ENCODE measurements at regions of chr1 and their contacts with region 1.

Region 1: DNA sequence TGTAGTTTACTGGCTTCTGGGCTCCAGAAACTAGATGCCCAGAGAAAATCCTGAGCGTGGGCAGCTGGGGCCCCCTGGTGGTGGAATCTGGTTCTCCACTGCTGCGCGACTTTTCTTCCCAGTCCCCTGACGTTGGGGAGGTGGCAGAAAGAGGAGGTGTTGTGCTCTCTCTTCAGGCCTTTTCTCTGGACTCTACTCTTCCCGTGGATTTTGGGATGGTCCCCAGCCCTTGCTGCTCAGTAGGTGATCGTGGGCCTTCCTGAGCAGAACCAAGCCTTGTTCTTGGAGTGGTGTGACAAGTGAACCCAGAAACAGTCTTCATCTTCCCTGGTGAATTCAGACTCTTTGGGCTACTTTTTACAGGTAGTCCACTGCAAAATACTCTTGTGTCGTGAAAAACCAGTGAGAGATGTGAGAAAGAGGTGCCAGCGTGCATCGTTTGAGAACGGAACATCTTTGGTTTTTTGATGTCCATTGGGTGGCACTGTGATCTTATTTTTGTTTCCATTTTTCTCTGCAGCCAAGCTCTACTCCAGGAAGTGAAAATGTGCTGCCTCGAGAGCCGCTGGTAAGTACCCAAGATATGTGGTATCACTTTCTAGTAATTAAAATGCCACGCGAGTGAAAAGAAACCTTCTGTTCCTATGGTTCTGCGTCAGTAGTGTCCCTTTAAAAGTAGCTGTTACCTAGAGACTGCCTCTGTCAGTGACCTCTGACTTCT is 20.2 kb downstream of the PEX14 start:
- DNase-seq: peak; percentile 76
- H3K4me3 ChIP-seq: peak overlapping the region; percentile 36
- H3K27ac ChIP-seq: peak overlapping the region; percentile 6
- H3K4me1 ChIP-seq: peaks cover 13% of the 10 kb centered on the region
- H3K27me3 ChIP-seq: no peaks in the 10 kb centered on the region
- CTCF ChIP-seq: peak; percentile 96

Region 2: DNA sequence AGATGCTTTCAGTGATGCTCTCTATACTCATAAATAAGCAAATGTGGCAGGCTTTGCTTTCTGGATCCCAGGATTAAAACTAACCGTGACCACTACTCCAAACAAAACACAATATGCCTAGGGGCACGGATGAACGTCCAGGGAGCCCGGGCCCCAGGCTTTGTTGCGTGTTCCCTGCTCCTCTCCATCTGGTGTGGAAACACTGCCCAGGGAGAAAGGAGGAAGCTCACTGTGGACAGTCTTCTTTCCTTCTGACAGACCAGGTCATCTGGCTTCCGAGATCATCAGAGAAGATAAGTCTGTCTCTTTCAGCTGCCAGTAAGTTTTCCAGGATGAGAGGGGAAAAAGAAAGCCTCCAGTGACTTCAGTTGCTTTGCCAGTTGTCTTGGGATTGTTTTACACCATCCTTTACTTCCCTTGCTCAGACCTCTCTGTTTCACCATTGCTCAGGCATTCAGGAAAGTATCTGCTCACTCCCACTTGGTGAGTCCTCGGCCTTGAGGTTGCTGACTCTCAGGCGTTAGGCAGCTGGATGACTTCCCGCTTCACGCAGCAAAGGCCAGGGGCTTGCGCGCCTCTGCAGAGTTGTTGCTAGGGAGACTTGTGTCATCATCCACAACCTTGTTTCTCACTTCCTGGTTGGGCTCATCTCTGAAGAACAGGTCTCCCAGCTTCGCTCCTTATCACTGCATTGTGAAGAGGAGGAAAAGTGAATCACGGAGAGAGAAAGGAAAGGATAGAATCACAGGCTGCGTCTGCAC is 116.7 kb before region 1 on chr1:
- CTCF ChIA-PET with region 1: no interaction called
- POLR2A ChIA-PET with region 1: interaction called, 3 read pairs
- intact Hi-C with region 1: loop called (anchors 2 kb)
- DNase-seq: no peak
- H3K4me3 ChIP-seq: no peak overlapping the region
- H3K27ac ChIP-seq: no peak overlapping the region
- H3K4me1 ChIP-seq: no peaks in the 10 kb centered on the region
- H3K27me3 ChIP-seq: no peaks in the 10 kb centered on the region
- CTCF ChIP-seq: no peak

Region 3: DNA sequence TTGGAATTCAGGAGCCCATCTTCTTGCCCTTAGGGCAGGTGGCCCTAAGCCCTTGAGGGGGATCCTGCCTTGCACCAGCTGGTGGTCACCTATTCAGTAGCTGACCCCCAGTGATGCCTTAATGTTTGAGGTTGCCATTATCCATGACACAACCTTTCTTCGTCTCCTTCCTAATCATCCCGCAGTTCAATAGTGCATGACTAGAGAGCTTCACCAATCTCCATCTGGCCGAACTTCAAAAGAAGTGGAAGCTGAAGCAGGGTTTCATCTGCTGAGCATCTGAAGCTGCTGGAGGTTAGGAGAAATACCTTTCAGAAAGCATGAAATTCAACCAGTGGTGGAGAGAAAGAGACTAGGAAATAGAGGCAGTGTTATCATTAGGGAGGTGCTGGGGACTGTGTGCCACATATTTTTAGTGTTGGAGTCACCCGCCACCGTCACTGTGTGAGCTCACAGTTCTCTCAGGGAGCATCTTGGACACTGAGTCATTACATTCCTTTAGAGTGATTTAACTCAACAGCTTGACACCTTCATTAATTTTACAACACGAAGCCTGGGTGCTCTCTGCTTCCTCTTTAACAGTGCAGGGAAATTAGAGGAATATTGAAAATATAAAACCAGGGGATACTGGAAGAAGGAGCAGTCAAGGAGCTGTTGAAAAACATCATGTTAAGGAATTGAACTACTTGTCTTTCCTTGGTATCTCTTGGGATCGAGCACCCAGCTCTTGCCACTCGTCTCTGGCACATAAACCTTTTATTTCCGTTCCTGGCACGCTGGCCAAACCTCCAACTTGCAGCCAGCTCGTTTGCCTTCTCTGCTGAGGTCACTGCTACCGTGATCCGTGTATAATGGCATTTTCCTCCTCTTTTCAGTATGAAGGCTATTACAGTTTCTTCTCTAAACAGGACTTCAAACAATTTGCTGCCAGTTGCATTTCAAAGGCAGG is 33.4 kb after region 1 on chr1:
- CTCF ChIA-PET with region 1: interaction called, 14 read pairs
- POLR2A ChIA-PET with region 1: no interaction called
- intact Hi-C with region 1: no loop called
- DNase-seq: peak; percentile 84
- H3K4me3 ChIP-seq: peak overlapping the region; percentile 2
- H3K27ac ChIP-seq: peak overlapping the region; percentile 51
- H3K4me1 ChIP-seq: peaks cover 39% of the 10 kb centered on the region
- H3K27me3 ChIP-seq: no peaks in the 10 kb centered on the region
- CTCF ChIP-seq: no peak

Region 4: DNA sequence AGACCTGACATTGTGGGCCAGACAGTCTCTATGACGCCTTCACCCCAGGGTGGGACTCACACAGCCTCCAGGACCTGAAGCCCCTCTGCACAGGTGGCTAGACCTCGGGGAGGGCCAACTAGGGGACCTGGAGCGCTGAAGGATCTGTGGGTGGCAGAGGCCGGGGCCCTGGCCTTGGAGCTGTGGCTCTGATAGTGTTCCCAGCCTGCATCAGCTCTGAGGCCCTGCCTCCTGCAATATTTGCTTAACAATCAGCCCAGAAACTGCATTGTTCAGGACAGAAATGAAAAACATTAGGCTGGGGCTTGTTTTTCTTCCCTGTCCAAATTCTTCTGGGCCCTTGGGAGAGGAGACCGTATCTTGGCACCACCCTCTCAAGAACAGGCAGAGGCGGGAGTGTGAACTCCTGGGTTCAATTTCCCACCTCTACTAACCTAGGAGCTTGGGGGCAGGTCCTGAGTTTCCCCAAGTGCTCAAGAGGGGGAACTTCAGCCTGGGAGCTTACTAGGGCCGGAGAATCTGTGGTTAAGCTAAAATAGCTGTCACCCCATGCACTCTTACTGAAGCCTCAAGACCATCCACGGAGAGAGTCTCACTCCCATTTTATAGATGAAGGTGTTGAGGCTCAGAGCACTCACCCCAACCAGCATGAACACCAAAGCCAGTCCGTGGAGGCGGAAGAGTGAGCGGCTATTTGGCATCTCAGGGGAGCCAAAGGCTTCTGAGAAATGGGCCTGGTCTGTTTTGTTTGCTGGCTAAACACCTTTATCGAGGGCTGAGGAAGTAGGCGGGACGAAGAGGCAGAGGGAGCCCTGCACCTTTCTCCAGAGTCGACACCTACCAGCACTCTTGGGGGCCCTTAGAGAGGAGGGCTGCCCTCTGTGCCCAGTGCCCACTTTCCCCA is 320.3 kb after region 1 on chr1:
- CTCF ChIA-PET with region 1: no interaction called
- POLR2A ChIA-PET with region 1: no interaction called
- intact Hi-C with region 1: no loop called
- DNase-seq: no peak
- H3K4me3 ChIP-seq: no peak overlapping the region
- H3K27ac ChIP-seq: no peak overlapping the region
- H3K4me1 ChIP-seq: no peaks in the 10 kb centered on the region
- H3K27me3 ChIP-seq: no peaks in the 10 kb centered on the region
- CTCF ChIP-seq: no peak

Region 5: DNA sequence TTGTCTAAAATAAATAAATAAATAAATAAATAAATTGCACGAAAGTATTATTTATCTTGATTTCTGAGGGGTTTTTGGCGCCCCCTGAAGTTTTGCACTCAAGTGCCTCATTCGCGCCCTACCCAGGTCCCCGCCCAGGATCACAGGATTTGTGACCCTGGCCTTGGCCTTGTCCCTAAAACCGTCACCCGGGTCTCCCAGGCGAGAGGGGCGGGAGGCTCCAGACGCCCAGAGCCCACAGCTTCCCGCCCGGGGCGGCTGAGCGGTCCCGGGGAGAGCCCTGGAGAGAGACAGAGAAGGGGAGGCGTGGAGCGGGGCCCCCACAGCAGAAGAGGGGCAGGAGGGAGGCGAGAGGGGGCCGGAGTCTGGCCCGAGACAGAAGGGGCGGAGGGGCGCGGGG is 393.4 kb after region 1 on chr1:
- CTCF ChIA-PET with region 1: no interaction called
- POLR2A ChIA-PET with region 1: no interaction called
- intact Hi-C with region 1: no loop called
- DNase-seq: peak; percentile 33
- H3K4me3 ChIP-seq: peak overlapping the region; percentile 40
- H3K27ac ChIP-seq: no peak overlapping the region
- H3K4me1 ChIP-seq: peaks cover 6% of the 10 kb centered on the region
- H3K27me3 ChIP-seq: no peaks in the 10 kb centered on the region
- CTCF ChIP-seq: peak; percentile 31; the same call in 1 of the 2 replicates

Measured in A673 (cell line).